ENCODE measurements at regions of chr1 and their contacts with region 1.

Region 1: DNA sequence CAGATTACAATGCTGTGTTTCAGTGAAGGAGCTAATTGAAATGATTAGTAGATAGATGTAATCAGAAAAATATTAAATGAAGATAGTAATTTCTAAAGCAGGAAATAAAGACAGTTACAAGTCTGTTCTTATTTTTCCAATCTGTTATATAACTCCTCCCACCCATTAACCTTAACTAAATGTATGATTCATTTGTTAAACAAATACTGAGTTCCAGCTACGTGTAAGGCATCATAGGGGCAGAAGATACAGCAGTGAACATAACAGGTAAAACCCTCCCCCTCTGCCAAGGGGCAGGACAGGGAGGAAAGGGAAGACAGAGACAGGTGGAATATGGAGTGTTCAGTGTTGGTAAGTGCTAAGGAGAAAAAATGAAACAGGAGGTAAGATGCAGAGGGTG is at the start of gene FAM177B:
- DNase-seq: no peak
- H3K4me3 ChIP-seq: no peak within 1 kb of the TSS
- H3K27ac ChIP-seq: no peak within 1 kb of the TSS
- H3K4me1 ChIP-seq: peaks cover 0 to 9% (median 3%) of the 10 kb centered on the region in 4 donors
- H3K27me3 ChIP-seq: no peaks in the 10 kb centered on the region
- CTCF ChIP-seq: no peak
- EP300 ChIP-seq: no peak
- POLR2A ChIP-seq: no peak
- total RNA-seq, gene FAM177B: 0.36 to 4.7 (median 0.54) TPM in 3 of 4 donors, not detected in the other

Region 2: GRCh38 chr1:222670110-222670509 is 66.9 kb before region 1 on chr1:
- intact Hi-C with region 1: no loop called
- DNase-seq: no peak
- H3K4me3 ChIP-seq: no peak overlapping the region
- H3K27ac ChIP-seq: peak overlapping the region in 1 of 4 donors; percentile 9
- H3K4me1 ChIP-seq: peaks cover 0 to 25% (median 13%) of the 10 kb centered on the region in 4 donors
- H3K27me3 ChIP-seq: no peaks in the 10 kb centered on the region
- CTCF ChIP-seq: no peak
- EP300 ChIP-seq: no peak
- POLR2A ChIP-seq: no peak

Region 3: DNA sequence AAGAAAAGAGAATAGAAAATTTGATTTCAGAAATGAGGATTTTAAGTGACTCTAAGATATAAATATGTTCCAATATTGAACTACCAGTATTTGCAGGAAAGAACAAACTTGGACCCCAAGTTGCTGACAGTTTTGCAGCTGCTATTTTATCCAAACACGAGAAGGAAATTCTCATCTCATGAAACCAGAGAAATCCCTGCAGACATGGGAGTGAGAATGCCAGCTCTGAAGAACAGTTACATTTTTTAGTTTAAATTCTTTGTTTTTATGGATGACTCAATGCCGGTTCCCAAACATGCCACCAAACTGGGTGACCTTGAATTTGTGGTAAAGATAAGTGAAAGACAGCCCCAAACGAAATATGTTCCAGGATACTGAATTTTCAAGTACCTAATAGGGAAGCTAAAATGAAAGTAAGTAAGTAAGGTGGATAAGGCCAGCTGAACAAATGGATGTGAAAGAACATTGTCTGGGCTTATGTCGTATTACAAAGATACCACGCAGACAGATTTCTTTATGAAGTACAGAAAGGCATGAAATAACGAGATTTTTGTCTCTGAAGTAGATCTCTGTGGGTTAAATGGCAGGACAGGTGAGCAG is 386.1 kb after region 1 on chr1:
- intact Hi-C with region 1: loop called (anchors 5 kb)
- DNase-seq: no peak
- H3K4me3 ChIP-seq: no peak overlapping the region
- H3K27ac ChIP-seq: peak overlapping the region in 1 of 4 donors; percentile 30
- H3K4me1 ChIP-seq: peaks cover 0 to 7% (median 5%) of the 10 kb centered on the region in 4 donors
- H3K27me3 ChIP-seq: no peaks in the 10 kb centered on the region
- CTCF ChIP-seq: no peak
- EP300 ChIP-seq: no peak
- POLR2A ChIP-seq: no peak

Region 4: GRCh38 chr1:223199094-223199647 is 462.2 kb after region 1 on chr1:
- intact Hi-C with region 1: no loop called
- DNase-seq: no peak
- H3K4me3 ChIP-seq: no peak overlapping the region
- H3K27ac ChIP-seq: no peak overlapping the region
- H3K4me1 ChIP-seq: no peaks in the 10 kb centered on the region
- H3K27me3 ChIP-seq: no peaks in the 10 kb centered on the region
- CTCF ChIP-seq: no peak
- EP300 ChIP-seq: no peak
- POLR2A ChIP-seq: no peak

Measured in sigmoid colon (tissue), 7 donors.